Left colon (tissue), 2 donors: ENCODE measurements at regions of chr2 and their contacts with region 1.

Region 1: GRCh38 chr2:213151437-213152064 is at the start of gene IKZF2:
- DNase-seq: peak; percentile 87 to 89
- ATAC-seq: peak; percentile 91
- total RNA-seq, gene IKZF2: 7.7 to 8.5 TPM

Region 2: DNA sequence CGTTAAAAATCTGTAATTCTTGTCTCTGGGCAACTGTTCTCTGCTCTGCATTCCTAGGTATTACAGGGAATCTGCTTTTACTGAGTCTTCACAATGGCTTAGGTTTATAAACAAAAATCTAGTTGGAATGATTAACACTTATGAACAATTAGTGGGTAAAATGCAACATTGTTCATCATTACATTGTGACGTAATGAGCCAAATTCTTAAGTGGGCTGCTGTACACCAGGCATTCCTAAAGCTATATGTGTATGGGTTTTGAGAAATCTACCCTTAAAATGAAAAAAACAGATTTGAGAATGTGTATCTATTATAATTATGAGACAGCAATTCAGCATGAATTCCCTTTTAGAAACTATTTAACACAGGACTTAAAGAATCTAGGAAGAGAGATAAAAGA is 571.4 kb before region 1 on chr2:
- intact Hi-C with region 1: no loop called
- DNase-seq: no peak
- ATAC-seq: no peak

Region 3: DNA sequence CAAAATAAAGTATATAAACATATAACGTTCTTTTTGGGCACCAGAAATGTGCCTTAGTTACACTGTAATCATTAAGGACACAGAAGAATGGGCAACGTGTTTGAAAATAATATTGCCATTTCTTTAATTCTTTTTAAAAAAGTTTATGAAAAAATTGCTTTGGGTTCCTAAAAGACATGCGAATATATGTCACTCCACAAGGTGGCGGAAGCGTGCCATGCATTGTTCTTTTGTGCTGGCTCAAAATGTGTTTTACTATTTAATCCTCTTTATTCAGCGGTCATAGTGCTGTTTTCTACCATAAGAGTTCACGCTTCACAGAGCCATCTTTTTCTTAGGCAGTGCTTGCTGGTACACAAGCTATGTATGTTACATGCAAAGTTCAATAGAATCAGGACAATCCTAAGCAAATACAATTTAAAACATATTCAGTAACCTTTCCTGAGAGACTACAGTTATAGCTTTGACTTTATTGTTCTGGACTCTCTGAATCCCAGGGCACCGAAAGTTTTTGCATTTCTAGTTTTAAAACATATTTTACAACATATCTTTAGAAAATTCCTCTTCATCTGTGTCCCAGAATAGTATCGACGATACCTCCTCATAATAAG is 465.2 kb before region 1 on chr2:
- intact Hi-C with region 1: loop called in 1 of 2 experiments (anchors 10 kb)
- DNase-seq: peak in 1 of 2 donors; percentile 51
- ATAC-seq: no peak

Region 4: GRCh38 chr2:212777020-212777491 is 374.5 kb before region 1 on chr2:
- intact Hi-C with region 1: loop called in 1 of 2 experiments (anchors 5 kb)
- DNase-seq: no peak
- ATAC-seq: peak; percentile 31

Region 5: GRCh38 chr2:213261771-213262170 is 110.2 kb after region 1 on chr2:
- intact Hi-C with region 1: no loop called
- DNase-seq: no peak
- ATAC-seq: no peak